ENCODE measurements at regions of chr7 and their contacts with region 1.

Region 1: DNA sequence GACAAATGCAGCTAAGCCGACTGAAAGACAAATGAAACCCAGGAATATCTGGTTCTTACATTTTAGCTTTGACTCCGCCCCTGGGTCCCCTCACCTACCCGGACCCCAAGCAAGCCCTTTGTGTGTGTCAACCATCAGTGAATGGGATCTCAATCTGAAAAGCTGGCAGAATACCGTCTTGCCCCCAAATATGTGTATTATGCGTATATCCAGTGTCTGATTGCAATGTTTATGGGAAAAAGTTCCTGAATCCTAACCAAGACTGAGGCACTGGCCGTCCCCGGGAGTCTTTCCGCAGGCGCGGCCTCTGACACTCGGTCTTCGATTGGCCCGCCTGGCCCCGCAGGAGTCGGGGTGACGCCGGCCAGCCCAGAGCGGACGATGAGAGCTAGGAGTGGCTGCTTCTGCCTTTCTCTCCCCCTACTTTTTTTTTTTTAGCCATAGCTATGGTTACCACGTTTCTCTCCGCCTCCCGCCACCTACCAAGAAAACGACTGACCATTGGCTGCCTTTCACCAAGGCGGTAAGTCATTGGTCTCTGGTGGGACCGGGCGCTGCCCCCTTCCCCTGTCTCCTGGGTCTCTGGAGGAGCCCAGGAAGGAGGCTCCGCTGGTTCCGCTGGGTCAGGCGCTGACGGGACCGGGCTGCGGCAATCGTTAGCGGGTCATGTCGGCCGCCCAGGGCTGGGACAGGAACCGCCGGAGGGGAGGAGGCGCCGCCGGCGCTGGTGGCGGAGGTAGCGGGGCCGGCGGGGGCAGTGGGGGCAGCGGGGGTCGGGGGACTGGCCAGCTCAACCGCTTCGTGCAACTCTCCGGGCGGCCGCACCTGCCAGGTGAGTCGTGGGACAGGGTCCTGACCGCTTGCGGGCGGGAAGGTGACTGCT is at the start of gene KLHDC10:
- DNase-seq: peak; percentile 98
- H3K4me3 ChIP-seq: peak within 1 kb of the TSS; percentile 90
- H3K27ac ChIP-seq: peak within 1 kb of the TSS; percentile 76
- H3K4me1 ChIP-seq: peaks cover 4% of the 10 kb centered on the region
- H3K27me3 ChIP-seq: no peaks in the 10 kb centered on the region
- CTCF ChIP-seq: no peak
- total RNA-seq, gene KLHDC10: 29.1 to 36.3 TPM

Region 2: DNA sequence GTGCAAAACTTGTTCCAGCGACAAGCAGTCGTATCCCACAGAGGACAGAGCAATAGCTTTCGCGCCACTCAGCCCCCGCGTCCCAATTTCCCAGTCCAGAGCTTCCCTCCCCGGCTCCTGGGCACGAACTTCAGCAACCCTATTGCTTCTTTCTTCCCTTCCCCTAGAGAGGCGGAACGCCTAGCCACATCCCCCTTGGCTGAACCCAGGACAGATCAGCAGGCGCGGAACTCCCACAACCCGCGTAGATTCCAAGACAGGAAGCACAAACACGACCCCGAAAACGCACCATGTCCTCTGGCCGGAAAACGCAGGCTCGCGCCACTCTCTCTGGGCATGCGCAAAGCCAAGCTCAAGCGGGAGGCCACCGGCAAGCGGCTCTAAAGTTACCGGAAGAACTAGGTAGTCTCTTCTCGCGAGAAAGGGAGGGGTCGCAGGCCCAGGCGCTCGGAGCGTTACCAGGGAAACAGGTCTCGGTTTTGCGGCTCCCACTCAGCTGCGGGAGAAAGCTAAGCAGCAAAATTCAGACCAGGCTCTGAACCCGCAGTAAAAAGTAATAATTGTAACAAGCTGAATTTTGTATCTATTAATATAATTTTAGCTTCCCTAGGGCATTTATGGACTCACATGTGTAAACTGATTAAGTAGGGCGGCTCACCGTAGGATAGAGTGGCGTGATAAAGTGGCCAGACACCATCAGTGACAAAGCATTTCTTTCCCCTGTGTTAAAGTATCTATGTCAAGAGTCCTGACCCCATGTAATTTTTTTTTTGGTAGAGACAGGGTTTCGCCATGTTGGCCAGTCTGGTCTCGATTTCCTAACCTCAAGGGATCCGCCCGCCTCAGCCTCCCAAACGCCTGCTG is 135.1 kb after region 1 on chr7 and contains the start of gene TMEM209:
- intact Hi-C with region 1: loop called (anchors 5 kb)
- DNase-seq: peak; percentile 97
- H3K4me3 ChIP-seq: peak within 1 kb of the TSS; percentile 64
- H3K27ac ChIP-seq: peak within 1 kb of the TSS; percentile 91
- H3K4me1 ChIP-seq: no peaks in the 10 kb centered on the region
- H3K27me3 ChIP-seq: no peaks in the 10 kb centered on the region
- CTCF ChIP-seq: no peak
- total RNA-seq, gene TMEM209: 18.6 to 21.8 TPM

Region 3: GRCh38 chr7:130758429-130759056 is 688.3 kb after region 1 on chr7:
- intact Hi-C with region 1: loop called (anchors 10 kb)
- DNase-seq: no peak
- H3K4me3 ChIP-seq: no peak overlapping the region
- H3K27ac ChIP-seq: no peak overlapping the region
- H3K4me1 ChIP-seq: no peaks in the 10 kb centered on the region
- H3K27me3 ChIP-seq: no peaks in the 10 kb centered on the region
- CTCF ChIP-seq: peak; percentile 55